ENCODE measurements at regions of chr17 and their contacts with region 1.

Region 1: GRCh38 chr17:29687596-29687995 is 64.9 kb upstream of the CORO6 start:
- DNase-seq: peak in 1 of 2 donors; percentile 43
- ATAC-seq: peak in 7 of 8 donors; percentile 39 to 67 (median 56)
- H3K4me3 ChIP-seq: no peak overlapping the region
- H3K27ac ChIP-seq: peak overlapping the region; percentile 2 to 74 (median 38)
- H3K4me1 ChIP-seq: peaks cover 2 to 61% (median 48%) of the 10 kb centered on the region in 9 donors
- H3K27me3 ChIP-seq: no peaks in the 10 kb centered on the region
- CTCF ChIP-seq: no peak

Region 2: GRCh38 chr17:29617125-29617480 is 70.5 kb before region 1 on chr17:
- intact Hi-C with region 1: no loop called
- DNase-seq: peak; percentile 56 to 75
- ATAC-seq: no peak
- H3K4me3 ChIP-seq: peak overlapping the region in 7 of 10 donors; percentile 19 to 59 (median 39)
- H3K27ac ChIP-seq: peak overlapping the region in 1 of 10 donors; percentile 83
- H3K4me1 ChIP-seq: peaks cover 14 to 95% (median 77%) of the 10 kb centered on the region in 9 donors
- H3K27me3 ChIP-seq: peaks cover 0 to 46% (median 0%) of the 10 kb centered on the region in 7 donors
- CTCF ChIP-seq: peak in 7 of 9 donors; percentile 26 to 73 (median 41)

Region 3: DNA sequence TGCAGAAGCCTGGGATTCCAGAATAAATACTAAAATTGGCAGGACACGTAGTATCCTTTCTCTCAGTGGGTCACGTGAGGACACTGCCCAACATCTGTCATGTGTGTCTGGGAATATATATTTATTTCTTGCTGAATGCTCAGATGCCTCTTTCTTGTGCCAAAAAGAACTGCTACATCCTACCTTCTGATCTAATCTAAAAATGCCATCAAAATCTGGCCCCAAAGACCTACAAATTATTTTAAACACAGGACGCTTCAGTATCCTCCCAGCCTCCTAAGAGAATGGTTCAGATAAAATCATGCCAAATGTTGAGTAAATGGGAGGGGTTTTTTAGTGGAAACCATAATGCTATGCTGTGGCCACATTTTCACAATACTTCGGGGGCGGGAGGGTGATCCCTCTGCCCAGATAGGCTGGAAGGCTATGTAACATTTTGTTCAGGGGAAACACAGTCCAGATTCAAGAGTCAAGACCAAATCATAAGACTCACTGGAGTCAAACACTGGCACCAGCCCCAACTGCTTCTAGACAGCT is 42.0 kb before region 1 on chr17:
- intact Hi-C with region 1: loop called in 1 of 10 experiments (anchors 5 kb)
- DNase-seq: peak; percentile 49 to 61
- ATAC-seq: peak; percentile 54 to 90 (median 83)
- H3K4me3 ChIP-seq: no peak overlapping the region
- H3K27ac ChIP-seq: peak overlapping the region; percentile 68 to 86 (median 77)
- H3K4me1 ChIP-seq: peaks cover 35 to 62% (median 59%) of the 10 kb centered on the region in 9 donors
- H3K27me3 ChIP-seq: no peaks in the 10 kb centered on the region
- CTCF ChIP-seq: no peak

Region 4: DNA sequence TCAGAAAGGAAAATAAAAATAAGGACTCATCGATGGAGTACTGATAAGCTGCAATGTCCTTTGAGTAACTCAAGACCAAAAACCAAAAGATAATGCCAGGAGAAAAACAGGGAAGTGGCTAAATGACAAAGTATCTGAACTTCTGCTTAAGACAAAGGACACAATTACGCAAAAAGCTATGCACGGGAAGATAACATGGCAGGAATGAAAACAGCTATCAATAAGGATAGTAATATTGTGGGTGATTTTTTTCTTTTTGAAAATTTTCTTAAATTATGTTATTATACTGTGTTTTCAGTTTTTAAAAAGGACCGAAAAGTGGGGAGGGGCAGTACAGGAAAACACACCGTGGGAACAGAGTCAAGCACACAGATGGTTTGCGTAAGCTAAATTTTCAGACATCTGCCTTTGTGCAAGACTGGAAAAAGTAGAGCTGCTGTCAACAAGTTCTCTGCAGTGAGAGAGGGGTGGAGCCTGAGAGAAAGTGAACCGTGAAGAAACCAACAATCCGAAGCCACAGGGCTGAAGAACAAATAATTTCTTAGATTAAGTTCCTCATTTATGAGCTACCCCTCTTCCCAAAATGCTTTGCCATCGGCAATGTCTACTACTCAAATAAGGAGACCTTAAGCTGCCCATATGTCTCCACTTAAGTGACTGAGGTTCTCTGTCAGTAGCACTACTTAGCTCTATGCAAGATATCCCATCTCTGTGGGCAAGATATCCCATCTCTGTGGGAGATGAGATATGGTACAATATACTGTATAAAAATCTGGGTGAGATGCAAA is 35.0 kb after region 1 on chr17:
- intact Hi-C with region 1: loop called in 1 of 10 experiments (anchors 5 kb)
- DNase-seq: peak in 1 of 2 donors; percentile 78
- ATAC-seq: peak; percentile 82 to 95 (median 90)
- H3K4me3 ChIP-seq: peak overlapping the region in 8 of 10 donors; percentile 2 to 43 (median 25)
- H3K27ac ChIP-seq: peak overlapping the region; percentile 44 to 94 (median 81)
- H3K4me1 ChIP-seq: peaks cover 7 to 96% (median 56%) of the 10 kb centered on the region in 9 donors
- H3K27me3 ChIP-seq: no peaks in the 10 kb centered on the region
- CTCF ChIP-seq: no peak

Region 5: DNA sequence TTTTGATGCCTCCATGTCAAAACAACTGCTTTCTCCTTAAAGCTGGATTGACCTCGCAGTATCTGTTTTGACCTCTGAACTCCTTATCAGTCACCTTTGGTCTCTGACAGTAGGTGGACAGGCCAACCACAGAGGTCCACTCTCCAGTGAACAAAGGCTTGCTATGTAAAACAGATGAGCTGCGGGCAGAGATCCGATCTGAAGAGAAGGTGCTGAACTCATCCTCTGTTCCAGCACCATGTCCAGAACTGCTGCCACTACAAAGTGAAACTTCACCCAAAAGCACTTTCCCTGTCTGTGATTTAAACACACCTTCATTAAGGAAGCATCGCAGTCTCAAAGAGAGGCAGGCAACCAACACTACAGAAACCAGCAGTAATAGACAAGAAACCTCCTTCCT is 52.4 kb after region 1 on chr17:
- intact Hi-C with region 1: loop called in 2 of 10 experiments (anchors 5 to 10 kb)
- DNase-seq: no peak
- ATAC-seq: peak in 1 of 8 donors; percentile 14
- H3K4me3 ChIP-seq: no peak overlapping the region
- H3K27ac ChIP-seq: peak overlapping the region in 9 of 10 donors; percentile 6 to 86 (median 51)
- H3K4me1 ChIP-seq: peaks cover 10 to 67% (median 51%) of the 10 kb centered on the region in 9 donors
- H3K27me3 ChIP-seq: no peaks in the 10 kb centered on the region
- CTCF ChIP-seq: no peak

Measured in heart right ventricle (tissue), 16 donors.